Activated T-helper 2 cell treated with anti-CD3 and anti-CD28 coated beads, Interferon-gamma antibody, Interleukin-2, Interleukin-4, amounts not matched to agents 10 μg/mL and 5 μg/mL and 100 μg/mL, durations not matched to agents 14 hours and 24 hours and 36 hours (primary cell): ENCODE measurements at regions of chr15 and their contacts with region 1.

Region 1: GRCh38 chr15:58227706-58228543 is 89.7 kb downstream of the AQP9 start:
- DNase-seq: peak; percentile 47
- H3K4me3 Mint-ChIP-seq: no peak overlapping the region
- H3K27ac Mint-ChIP-seq: no peak overlapping the region
- H3K4me1 Mint-ChIP-seq: peaks cover 8% of the 10 kb centered on the region
- H3K27me3 Mint-ChIP-seq: peaks cover 19% of the 10 kb centered on the region

Region 2: DNA sequence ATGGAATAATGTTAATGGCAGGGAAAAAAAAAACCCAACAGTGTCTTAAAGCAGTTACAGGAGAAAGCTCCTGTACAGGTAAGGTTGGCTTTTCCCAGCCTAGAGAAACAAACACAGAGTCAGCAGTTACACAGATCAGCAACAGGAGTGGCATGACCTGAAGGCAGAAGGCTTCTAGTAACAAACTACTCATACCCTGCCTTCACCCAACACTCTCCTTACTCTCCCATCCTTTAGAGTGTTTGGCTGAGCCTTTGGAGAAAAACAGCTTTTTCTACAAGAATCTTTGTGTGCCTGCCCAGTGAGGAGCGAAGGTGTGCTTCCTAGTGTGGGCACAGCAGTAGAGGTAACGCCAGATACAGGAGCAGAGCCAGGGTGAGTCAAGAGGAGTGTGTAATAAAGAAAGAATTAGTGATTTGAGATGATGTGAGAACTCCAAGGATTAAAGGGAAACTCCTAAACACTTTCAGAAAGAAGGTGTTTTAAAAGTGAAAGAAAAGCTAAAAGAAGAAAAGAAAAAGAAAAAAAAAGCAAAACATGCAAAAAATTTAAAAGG is 368.7 kb before region 1 on chr15:
- intact Hi-C with region 1: no loop called
- DNase-seq: no peak
- H3K4me3 Mint-ChIP-seq: no peak overlapping the region
- H3K27ac Mint-ChIP-seq: no peak overlapping the region
- H3K4me1 Mint-ChIP-seq: peaks cover 2% of the 10 kb centered on the region
- H3K27me3 Mint-ChIP-seq: peaks cover 39% of the 10 kb centered on the region

Region 3: GRCh38 chr15:58758138-58758537 is 530.2 kb after region 1 on chr15:
- intact Hi-C with region 1: loop called (anchors 2 kb)
- DNase-seq: no peak
- H3K4me3 Mint-ChIP-seq: no peak overlapping the region
- H3K27ac Mint-ChIP-seq: no peak overlapping the region
- H3K4me1 Mint-ChIP-seq: peaks cover 26% of the 10 kb centered on the region
- H3K27me3 Mint-ChIP-seq: no peaks in the 10 kb centered on the region